HCT116 (cell line): ENCODE measurements at regions of chr4 and their contacts with region 1.

Region 1: DNA sequence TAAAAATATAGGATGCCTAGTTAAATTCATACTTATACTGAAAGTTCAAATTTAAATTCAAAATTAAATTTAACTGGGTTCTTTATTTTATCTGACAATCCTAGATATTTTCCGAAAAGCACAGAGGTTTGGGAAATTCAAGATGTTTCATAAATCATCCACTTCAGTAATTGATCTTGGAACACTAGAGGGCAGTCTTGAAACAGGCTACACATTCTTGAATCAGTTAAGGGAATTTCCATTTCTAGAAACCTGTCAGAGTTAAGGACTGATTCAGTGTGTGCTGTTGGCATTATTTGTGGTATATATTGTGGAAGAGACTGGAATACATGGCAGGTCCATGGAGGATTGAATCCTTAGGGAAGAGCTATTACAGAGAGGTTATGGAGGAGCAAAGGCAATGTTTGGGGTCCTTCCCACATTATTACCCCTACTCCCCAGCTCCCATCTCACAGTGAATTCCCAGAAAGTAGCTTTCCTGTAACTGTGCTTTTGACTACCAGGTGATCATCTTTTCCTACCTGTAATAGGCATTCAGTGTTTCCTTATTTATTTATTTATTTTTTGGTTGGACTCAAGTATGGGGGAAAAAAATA is 92.9 kb downstream of the EGF start:
- DNase-seq: peak; percentile 57
- ATAC-seq: peak; percentile 74
- H3K4me3 ChIP-seq: no peak overlapping the region
- H3K27ac ChIP-seq: no peak overlapping the region
- H3K4me1 ChIP-seq: no peaks in the 10 kb centered on the region
- H3K27me3 ChIP-seq: no peaks in the 10 kb centered on the region
- CTCF ChIP-seq: peak; percentile 62 to 89 (median 83)
- POLR2A ChIP-seq: no peak
- RAD21 ChIP-seq: peak; percentile 93

Region 2: GRCh38 chr4:110211007-110211769 is 205.6 kb after region 1 on chr4:
- CTCF ChIA-PET with region 1: no interaction called
- POLR2A ChIA-PET with region 1: no interaction called
- RAD21 ChIA-PET with region 1: no interaction called
- intact Hi-C with region 1: loop called (anchors 2 kb)
- DNase-seq: no peak
- ATAC-seq: peak; percentile 84
- H3K4me3 ChIP-seq: no peak overlapping the region
- H3K27ac ChIP-seq: no peak overlapping the region
- H3K4me1 ChIP-seq: no peaks in the 10 kb centered on the region
- H3K27me3 ChIP-seq: no peaks in the 10 kb centered on the region
- CTCF ChIP-seq: peak; percentile 51 to 82 (median 80); a peak in 5 of 6 replicates
- POLR2A ChIP-seq: no peak
- RAD21 ChIP-seq: peak; percentile 73

Region 3: GRCh38 chr4:110344162-110344561 is 338.6 kb after region 1 on chr4:
- CTCF ChIA-PET with region 1: interaction called, 6 read pairs
- POLR2A ChIA-PET with region 1: no interaction called
- RAD21 ChIA-PET with region 1: no interaction called
- intact Hi-C with region 1: loop called (anchors 2 kb)
- DNase-seq: peak; percentile 3
- ATAC-seq: peak; percentile 72
- H3K4me3 ChIP-seq: no peak overlapping the region
- H3K27ac ChIP-seq: no peak overlapping the region
- H3K4me1 ChIP-seq: no peaks in the 10 kb centered on the region
- H3K27me3 ChIP-seq: no peaks in the 10 kb centered on the region
- CTCF ChIP-seq: peak; percentile 37 to 50 (median 50); a peak in 5 of 6 replicates
- POLR2A ChIP-seq: no peak
- RAD21 ChIP-seq: peak; percentile 66

Region 4: DNA sequence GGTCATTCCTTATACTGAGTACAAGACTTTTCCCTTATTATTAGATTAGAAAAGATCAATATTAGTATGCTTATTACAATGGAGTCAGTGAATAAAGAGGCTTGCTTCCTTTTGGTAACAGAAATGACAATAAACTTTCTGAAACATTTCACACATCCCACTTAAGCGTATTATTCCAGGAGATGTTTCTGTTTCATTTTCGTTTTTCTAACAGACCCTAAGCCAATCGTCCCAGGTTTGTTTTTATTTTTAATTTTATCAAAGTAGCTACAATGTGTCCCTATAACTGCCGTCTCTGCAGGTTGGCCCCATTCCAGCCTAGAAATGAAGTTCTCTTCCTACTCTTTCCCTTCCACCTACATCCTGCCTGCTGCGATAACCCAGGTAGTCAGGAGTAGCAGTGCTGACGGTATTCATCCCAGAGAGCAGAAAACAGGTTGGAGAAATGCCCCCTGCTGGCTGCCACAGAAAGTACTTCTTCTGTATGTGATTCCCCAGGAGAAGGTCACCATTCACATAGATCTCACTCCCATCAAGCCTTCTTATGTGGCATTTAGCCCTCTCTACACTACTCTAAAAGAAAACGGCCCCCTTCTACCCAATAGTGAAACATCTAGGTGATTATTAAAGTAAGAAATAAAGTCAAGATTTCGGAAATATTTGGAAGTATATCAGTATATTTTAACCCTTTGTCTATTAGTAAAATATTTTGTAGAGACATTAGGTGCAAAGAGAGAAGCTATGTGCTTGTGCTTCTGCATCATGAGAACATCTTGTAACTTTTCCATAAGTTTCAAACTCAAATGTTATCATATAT is 510.8 kb after region 1 on chr4:
- CTCF ChIA-PET with region 1: interaction called, 13 read pairs
- POLR2A ChIA-PET with region 1: interaction called, 4 read pairs
- RAD21 ChIA-PET with region 1: interaction called in 1 of 2 experiments, 8 read pairs
- intact Hi-C with region 1: loop called (anchors 1 kb)
- DNase-seq: peak; percentile 72
- ATAC-seq: peak; percentile 98
- H3K4me3 ChIP-seq: peak overlapping the region; percentile 33 to 53
- H3K27ac ChIP-seq: no peak overlapping the region
- H3K4me1 ChIP-seq: peaks cover 0 to 9% of the 10 kb centered on the region in 2 experiments; a peak in 1 of 4 replicates
- H3K27me3 ChIP-seq: no peaks in the 10 kb centered on the region
- CTCF ChIP-seq: peak; percentile 73 to 84 (median 79)
- POLR2A ChIP-seq: no peak
- RAD21 ChIP-seq: peak; percentile 61